Activated CD8-positive, alpha-beta memory T cell treated with anti-CD3 and anti-CD28 coated beads, Interleukin-2, amount 10 ng/mL, durations not matched to agents 7 days and 5 days (primary cell): ENCODE measurements at regions of chr5 and their contacts with region 1.

Region 1: DNA sequence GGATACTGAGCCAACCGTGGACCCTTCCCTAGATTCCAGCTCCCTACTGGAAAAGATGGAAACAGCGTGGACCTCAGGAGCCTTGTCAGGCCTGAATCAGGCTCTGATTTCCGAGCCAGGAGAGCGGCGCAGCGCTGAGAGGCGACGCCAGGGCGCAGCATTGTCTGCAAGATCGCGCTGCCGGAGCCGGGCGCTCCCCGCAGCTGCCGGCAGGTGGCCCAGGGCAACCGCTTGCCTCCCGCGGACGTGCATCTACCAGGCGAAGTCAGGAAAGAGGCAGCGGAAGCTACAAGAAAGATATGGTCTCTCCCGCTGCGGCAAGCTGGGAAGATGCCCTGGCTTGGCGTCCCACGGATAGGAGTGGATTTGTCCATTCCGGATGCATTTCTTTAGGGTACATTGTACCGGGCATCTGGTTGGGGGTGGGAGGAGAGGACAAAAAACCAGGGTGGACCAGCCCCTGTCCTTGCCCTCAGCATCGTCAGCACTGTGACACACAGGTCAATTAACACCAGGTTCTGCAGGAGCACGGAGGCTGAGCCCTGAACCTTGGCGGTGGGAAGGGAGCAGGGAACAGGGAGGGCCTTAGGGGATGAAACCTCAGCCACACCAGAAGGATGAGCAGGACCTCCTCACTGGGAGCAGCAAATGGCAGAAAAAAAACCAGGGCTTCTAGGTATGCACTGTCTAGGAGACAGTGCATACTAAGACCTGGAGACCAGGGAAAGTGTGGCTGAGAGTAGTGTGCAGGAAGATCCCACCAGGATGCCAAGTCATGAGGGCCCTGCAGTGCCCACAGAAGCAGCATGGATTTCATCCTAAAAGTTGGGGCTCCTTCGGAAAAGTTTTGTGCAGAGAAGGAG is 55.9 kb downstream of the SFXN1 start:
- DNase-seq: peak; percentile 86
- ATAC-seq: peak; percentile 100
- H3K4me3 Mint-ChIP-seq: no peak overlapping the region
- H3K27ac Mint-ChIP-seq: peak overlapping the region; percentile 20
- H3K4me1 Mint-ChIP-seq: peaks cover 28% of the 10 kb centered on the region
- H3K27me3 Mint-ChIP-seq: peaks cover 3% of the 10 kb centered on the region

Region 2: GRCh38 chr5:175517818-175518450 is 16.4 kb before region 1 on chr5:
- CTCF ChIA-PET with region 1: interaction called, 18 read pairs
- DNase-seq: peak; percentile 83
- ATAC-seq: peak; percentile 59
- H3K4me3 Mint-ChIP-seq: peak overlapping the region; percentile 37
- H3K27ac Mint-ChIP-seq: peak overlapping the region; percentile 82
- H3K4me1 Mint-ChIP-seq: peaks cover 70% of the 10 kb centered on the region
- H3K27me3 Mint-ChIP-seq: no peaks in the 10 kb centered on the region

Region 3: DNA sequence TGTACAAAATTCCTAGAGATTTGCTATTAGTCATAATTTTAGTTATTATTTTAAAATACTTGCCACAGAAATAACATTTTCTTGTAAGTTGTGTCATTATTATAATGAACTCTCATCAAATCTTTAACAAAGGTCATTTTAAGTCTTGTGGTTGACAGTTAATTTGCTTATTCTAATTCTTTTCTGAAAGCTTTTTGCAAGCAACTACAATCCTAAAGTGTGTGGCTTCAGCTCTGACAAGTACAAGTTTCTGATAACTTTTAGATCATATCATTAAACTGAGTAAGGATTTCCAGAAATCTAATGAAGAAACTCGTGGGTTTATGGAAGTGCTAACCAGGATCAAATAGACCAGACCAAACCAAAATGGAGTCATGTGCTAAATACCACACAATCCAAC is 30.4 kb after region 1 on chr5:
- CTCF ChIA-PET with region 1: interaction called, 12 read pairs
- DNase-seq: no peak
- ATAC-seq: no peak
- H3K4me3 Mint-ChIP-seq: no peak overlapping the region
- H3K27ac Mint-ChIP-seq: no peak overlapping the region
- H3K4me1 Mint-ChIP-seq: no peaks in the 10 kb centered on the region
- H3K27me3 Mint-ChIP-seq: peaks cover 45% of the 10 kb centered on the region

Region 4: DNA sequence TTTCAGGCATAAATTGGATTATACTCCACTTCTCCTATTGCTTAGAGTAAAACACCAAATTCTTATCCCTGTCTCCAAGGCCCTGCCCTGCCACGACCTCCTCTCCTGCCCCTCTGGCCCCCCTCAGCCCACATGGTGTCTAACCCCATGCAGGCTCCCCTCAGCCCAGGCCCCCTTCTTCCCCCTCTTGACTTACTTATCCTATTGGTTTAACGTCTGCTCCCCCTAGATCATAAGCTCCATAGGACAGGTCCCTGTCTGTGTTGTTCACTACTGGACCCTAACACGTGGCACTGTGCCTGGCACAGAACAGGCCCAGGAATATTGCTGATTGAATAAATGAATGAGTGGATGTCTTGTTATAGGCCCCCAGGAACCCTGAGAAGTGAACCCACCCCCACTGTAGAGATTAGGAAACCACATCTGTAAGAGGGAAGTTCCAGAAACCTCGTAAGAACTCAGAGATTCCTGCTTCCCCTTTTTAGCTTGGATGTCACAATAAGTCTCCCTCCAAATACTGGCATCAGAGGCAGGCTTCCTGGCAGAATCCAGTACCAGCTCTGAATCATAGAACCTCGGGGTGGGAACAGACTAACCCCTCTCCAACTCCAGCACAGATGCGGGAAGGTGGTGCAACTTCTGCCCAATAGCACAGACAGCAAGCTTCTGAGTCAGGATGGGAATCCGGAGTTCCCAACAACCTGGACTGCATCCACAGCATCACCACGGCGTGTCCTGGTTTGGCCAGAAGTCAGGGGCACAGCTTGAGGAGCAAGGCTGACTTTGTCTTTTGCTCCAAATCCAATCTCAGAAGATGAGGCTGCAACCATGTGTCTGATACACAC is 155.1 kb after region 1 on chr5:
- CTCF ChIA-PET with region 1: interaction called, 74 read pairs
- DNase-seq: no peak
- ATAC-seq: no peak
- H3K4me3 Mint-ChIP-seq: no peak overlapping the region
- H3K27ac Mint-ChIP-seq: no peak overlapping the region
- H3K4me1 Mint-ChIP-seq: no peaks in the 10 kb centered on the region
- H3K27me3 Mint-ChIP-seq: no peaks in the 10 kb centered on the region

Region 5: GRCh38 chr5:175718401-175719108 is 184.3 kb after region 1 on chr5:
- CTCF ChIA-PET with region 1: interaction called, 49 read pairs
- DNase-seq: peak; percentile 67
- ATAC-seq: peak; percentile 20
- H3K4me3 Mint-ChIP-seq: no peak overlapping the region
- H3K27ac Mint-ChIP-seq: no peak overlapping the region
- H3K4me1 Mint-ChIP-seq: peaks cover 1% of the 10 kb centered on the region
- H3K27me3 Mint-ChIP-seq: peaks cover 2% of the 10 kb centered on the region